HCT116 (cell line): ENCODE measurements at regions of chr17 and their contacts with region 1.

Region 1: DNA sequence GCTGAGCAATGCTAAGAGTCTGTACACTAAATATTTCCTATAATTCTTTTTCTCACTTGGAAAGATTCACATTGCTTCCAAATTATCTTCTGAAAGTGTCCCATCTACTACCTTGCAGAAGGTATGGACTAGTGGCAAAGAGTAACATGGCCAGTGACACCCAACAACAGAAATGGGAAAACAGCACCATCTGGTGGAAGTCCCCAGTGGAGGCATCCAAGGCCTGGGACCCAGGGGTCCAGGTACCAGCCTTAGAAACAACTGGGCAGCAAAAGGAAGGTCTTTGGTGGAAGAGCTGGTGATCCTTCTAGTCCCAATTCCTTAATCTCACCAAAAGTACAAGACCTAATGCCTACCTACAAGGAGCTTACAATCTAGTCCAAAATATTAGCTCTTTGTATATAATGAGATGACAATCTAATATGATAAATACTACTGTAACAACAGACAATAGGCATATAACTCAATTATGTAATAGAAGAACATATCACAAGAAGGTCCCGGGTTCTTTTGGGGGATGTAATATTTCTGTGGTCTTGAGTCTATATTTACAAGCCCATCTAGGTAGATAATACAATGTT is 55.3 kb downstream of the SKAP1 start:
- DNase-seq: peak; percentile 63
- ATAC-seq: peak; percentile 99
- H3K4me3 ChIP-seq: no peak overlapping the region
- H3K27ac ChIP-seq: no peak overlapping the region
- H3K4me1 ChIP-seq: no peaks in the 10 kb centered on the region
- H3K27me3 ChIP-seq: no peaks in the 10 kb centered on the region
- CTCF ChIP-seq: peak; percentile 92 to 97 (median 94)
- POLR2A ChIP-seq: no peak
- RAD21 ChIP-seq: peak; percentile 91

Region 2: DNA sequence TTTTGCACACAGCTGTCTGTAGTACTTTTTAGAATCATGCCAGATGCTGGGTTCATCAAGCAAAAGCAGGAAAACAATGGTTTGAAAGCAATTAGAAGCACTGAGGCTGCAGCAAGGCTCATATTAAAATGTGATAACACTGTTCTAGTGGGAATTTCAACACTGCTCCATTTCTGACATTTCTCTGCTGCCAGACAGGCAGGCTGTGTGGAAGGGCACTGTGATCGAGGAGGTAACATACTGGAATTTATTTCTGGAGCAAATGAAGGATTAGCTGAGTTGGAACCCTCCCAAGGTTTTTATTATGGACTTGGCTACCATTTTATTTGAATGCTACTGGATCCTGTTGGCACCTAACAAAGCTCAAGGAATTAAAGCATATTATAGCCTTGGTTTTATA is 11.6 kb before region 1 on chr17:
- CTCF ChIA-PET with region 1: interaction called, 11 read pairs
- POLR2A ChIA-PET with region 1: no interaction called
- RAD21 ChIA-PET with region 1: no interaction called
- intact Hi-C with region 1: no loop called
- DNase-seq: no peak
- ATAC-seq: no peak
- H3K4me3 ChIP-seq: no peak overlapping the region
- H3K27ac ChIP-seq: no peak overlapping the region
- H3K4me1 ChIP-seq: no peaks in the 10 kb centered on the region
- H3K27me3 ChIP-seq: no peaks in the 10 kb centered on the region
- CTCF ChIP-seq: no peak
- POLR2A ChIP-seq: no peak
- RAD21 ChIP-seq: no peak